PC-9 (cell line): ENCODE measurements at regions of chr12 and their contacts with region 1.

Region 1: DNA sequence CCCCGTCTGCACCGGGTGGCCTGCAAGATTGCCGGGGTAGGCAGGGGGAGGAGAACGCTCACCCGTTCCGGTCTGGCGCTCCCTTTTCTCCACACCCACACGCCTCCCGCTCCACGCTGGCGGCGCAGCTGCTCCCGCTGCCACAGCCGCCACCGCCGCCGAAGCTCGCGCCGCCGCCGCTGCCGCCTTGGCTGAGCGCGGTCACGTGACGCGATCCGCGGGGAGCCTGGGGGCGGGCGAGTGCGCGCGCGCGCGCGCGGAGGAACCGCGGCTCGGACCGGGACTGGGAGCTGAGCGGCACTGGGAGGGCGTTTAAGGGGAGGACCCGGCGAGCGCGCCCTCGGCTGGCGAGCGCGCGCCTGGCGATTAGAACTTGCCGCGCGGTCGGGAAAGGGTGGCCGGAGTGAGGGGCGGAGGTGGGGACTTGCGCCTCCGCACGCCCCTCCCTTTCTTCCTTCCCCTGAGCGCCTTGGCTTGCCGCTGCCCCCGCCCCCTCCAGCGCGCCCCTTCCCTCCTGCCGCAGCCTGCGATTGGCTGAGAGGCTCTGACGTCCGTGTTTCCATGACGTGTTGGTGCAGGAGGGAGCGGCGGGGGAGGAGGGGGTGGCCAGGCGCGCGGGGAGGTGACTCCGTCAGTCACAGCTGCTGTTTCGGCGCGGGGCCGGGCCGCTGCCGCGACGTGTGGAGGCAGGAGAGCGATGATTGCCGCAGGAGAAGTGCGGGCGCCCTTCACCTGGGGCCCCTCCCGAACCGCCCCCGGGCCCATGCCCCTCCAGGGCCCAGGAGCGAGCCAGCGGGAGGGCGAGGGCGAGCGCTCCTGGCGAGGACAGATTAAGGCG is 738 bp upstream of the ATP2B1 start:
- DNase-seq: peak; percentile 92 to 94
- H3K4me3 ChIP-seq: peak overlapping the region; percentile 93
- H3K27ac ChIP-seq: peak overlapping the region; percentile 80
- H3K4me1 ChIP-seq: peaks cover 35% of the 10 kb centered on the region
- H3K27me3 ChIP-seq: no peaks in the 10 kb centered on the region
- CTCF ChIP-seq: no peak

Region 2: GRCh38 chr12:89542912-89543592 is 166.3 kb before region 1 on chr12:
- CTCF ChIA-PET with region 1: no interaction called
- POLR2A ChIA-PET with region 1: no interaction called
- intact Hi-C with region 1: loop called (anchors 5 kb)
- DNase-seq: peak; percentile 60 to 62
- H3K4me3 ChIP-seq: no peak overlapping the region
- H3K27ac ChIP-seq: no peak overlapping the region
- H3K4me1 ChIP-seq: no peaks in the 10 kb centered on the region
- H3K27me3 ChIP-seq: no peaks in the 10 kb centered on the region
- CTCF ChIP-seq: peak; percentile 92

Region 3: GRCh38 chr12:89949457-89950195 is 240.2 kb after region 1 on chr12:
- CTCF ChIA-PET with region 1: no interaction called
- POLR2A ChIA-PET with region 1: no interaction called
- intact Hi-C with region 1: loop called (anchors 5 kb)
- DNase-seq: peak in 1 of 2 experiments; percentile 77
- H3K4me3 ChIP-seq: no peak overlapping the region
- H3K27ac ChIP-seq: peak overlapping the region; percentile 43
- H3K4me1 ChIP-seq: peaks cover 49% of the 10 kb centered on the region
- H3K27me3 ChIP-seq: no peaks in the 10 kb centered on the region
- CTCF ChIP-seq: no peak

Region 4: GRCh38 chr12:90102957-90103652 is 393.7 kb after region 1 on chr12:
- CTCF ChIA-PET with region 1: no interaction called
- POLR2A ChIA-PET with region 1: no interaction called
- intact Hi-C with region 1: loop called (anchors 5 kb)
- DNase-seq: peak; percentile 7 to 40
- H3K4me3 ChIP-seq: no peak overlapping the region
- H3K27ac ChIP-seq: no peak overlapping the region
- H3K4me1 ChIP-seq: peaks cover 15% of the 10 kb centered on the region
- H3K27me3 ChIP-seq: no peaks in the 10 kb centered on the region
- CTCF ChIP-seq: peak; percentile 61

Region 5: GRCh38 chr12:90268574-90268973 is 559.2 kb after region 1 on chr12:
- CTCF ChIA-PET with region 1: no interaction called
- POLR2A ChIA-PET with region 1: interaction called, 10 read pairs
- intact Hi-C with region 1: no loop called
- DNase-seq: no peak
- H3K4me3 ChIP-seq: no peak overlapping the region
- H3K27ac ChIP-seq: no peak overlapping the region
- H3K4me1 ChIP-seq: no peaks in the 10 kb centered on the region
- H3K27me3 ChIP-seq: no peaks in the 10 kb centered on the region
- CTCF ChIP-seq: no peak